A673 (cell line): ENCODE measurements at regions of chr2 and their contacts with region 1.

Region 1: GRCh38 chr2:152925547-152926327 is 207.3 kb downstream of the ARL6IP6 start:
- DNase-seq: peak; percentile 87
- H3K4me3 ChIP-seq: no peak overlapping the region
- H3K27ac ChIP-seq: no peak overlapping the region
- H3K4me1 ChIP-seq: no peaks in the 10 kb centered on the region
- H3K27me3 ChIP-seq: peaks cover 11% of the 10 kb centered on the region
- CTCF ChIP-seq: peak; percentile 94

Region 2: DNA sequence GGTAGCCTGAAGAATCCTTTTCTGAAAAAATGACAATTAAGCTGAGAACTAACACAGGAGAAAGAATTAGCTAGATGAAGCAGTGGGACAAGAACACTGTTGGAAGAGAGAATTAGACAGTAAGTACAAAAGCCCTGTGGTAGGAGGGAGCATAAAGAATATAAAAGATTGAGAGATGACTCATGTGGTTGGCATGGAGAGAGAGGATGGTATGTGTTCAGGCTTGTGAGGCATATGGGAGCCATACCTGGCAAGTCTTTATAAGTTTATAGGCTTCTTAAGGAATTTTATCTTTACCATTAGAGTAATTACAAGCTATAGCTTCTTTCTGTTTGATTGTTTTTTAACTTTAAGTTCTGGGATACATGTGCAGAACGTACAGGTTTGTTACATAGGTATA is 117.6 kb after region 1 on chr2:
- CTCF ChIA-PET with region 1: no interaction called
- POLR2A ChIA-PET with region 1: no interaction called
- intact Hi-C with region 1: no loop called
- DNase-seq: no peak
- H3K4me3 ChIP-seq: no peak overlapping the region
- H3K27ac ChIP-seq: no peak overlapping the region
- H3K4me1 ChIP-seq: no peaks in the 10 kb centered on the region
- H3K27me3 ChIP-seq: no peaks in the 10 kb centered on the region
- CTCF ChIP-seq: no peak

Region 3: DNA sequence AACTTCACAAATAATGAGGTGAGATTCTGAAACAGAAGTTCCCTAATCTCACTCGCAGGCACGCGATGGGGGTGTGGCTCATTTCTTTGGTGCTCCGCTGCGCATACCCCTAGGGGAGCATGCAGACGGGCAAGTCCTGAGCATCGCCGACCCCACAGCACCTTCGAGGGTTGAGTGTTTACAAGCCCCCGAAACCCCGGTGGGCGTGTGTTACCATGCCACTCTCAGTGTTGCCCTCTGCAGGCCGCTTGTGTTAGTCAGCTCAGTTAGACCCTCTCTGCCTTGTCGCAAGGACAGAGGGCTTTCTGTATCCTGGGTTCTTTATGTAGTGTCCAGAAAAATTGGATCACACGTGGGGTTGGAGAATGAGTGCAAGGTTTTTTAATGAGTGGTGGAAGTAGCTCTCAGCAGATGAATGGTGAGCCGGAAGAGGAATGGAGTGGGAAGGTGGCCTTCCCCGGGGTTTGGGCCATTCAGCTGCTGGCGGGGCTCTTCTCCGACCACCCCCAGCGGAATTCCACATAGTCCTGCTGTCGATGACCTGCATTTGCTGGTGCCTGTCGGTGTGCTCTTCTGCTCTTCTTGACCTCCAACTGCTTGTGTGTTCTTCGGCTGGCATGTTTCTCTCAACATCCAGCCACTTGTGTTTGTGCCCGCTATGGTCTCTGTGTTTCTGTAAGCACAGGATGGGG is 361.5 kb after region 1 on chr2:
- CTCF ChIA-PET with region 1: no interaction called
- POLR2A ChIA-PET with region 1: no interaction called
- intact Hi-C with region 1: loop called (anchors 5 kb)
- DNase-seq: peak; percentile 54
- H3K4me3 ChIP-seq: peak overlapping the region; percentile 24
- H3K27ac ChIP-seq: no peak overlapping the region
- H3K4me1 ChIP-seq: no peaks in the 10 kb centered on the region
- H3K27me3 ChIP-seq: peaks cover 4% of the 10 kb centered on the region
- CTCF ChIP-seq: peak; percentile 71